CD8-positive, alpha-beta T cell (primary cell): ENCODE measurements at regions of chr6 and their contacts with region 1.

Region 1: DNA sequence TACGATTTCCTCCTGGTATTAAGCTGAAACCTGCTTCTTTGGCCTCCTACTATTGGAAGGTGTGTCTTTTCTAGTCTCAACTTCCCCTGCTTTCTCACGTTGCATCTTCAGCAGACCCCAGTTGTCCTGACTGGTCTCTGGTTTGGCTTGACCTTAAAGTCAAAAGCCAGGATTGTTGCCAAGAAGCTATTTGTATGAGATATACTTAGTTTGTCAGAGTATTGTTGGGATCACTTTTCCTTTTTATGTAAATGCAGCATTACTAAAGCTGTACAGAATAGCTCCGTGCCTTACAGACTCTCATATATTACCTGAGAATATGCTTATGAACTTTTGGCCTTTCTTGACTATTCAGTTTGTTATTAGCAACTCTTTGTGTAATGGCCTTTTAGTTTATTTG is 61.1 kb downstream of the TSPYL4 start:
- DNase-seq: no peak
- ATAC-seq: no peak
- H3K4me3 ChIP-seq: no peak overlapping the region
- H3K4me3 Mint-ChIP-seq: no peak overlapping the region
- H3K27ac ChIP-seq: no peak overlapping the region
- H3K27ac Mint-ChIP-seq: no peak overlapping the region
- H3K4me1 ChIP-seq: no peaks in the 10 kb centered on the region
- H3K4me1 Mint-ChIP-seq: no peaks in the 10 kb centered on the region
- H3K27me3 ChIP-seq: no peaks in the 10 kb centered on the region
- H3K27me3 Mint-ChIP-seq: no peaks in the 10 kb centered on the region
- CTCF ChIP-seq: no peak

Region 2: GRCh38 chr6:116010790-116011401 is 181.9 kb before region 1 on chr6:
- CTCF ChIA-PET with region 1: no interaction called
- POLR2A ChIA-PET with region 1: no interaction called
- intact Hi-C with region 1: no loop called
- DNase-seq: peak in 8 of 9 experiments; percentile 4 to 57 (median 38)
- ATAC-seq: peak; percentile 54
- H3K4me3 ChIP-seq: no peak overlapping the region
- H3K4me3 Mint-ChIP-seq: no peak overlapping the region
- H3K27ac ChIP-seq: no peak overlapping the region
- H3K27ac Mint-ChIP-seq: no peak overlapping the region
- H3K4me1 ChIP-seq: no peaks in the 10 kb centered on the region
- H3K4me1 Mint-ChIP-seq: no peaks in the 10 kb centered on the region
- H3K27me3 ChIP-seq: no peaks in the 10 kb centered on the region
- H3K27me3 Mint-ChIP-seq: peaks cover 17% of the 10 kb centered on the region
- CTCF ChIP-seq: peak; percentile 71

Region 3: GRCh38 chr6:116210750-116211425 is 18.1 kb after region 1 on chr6:
- CTCF ChIA-PET with region 1: no interaction called
- POLR2A ChIA-PET with region 1: no interaction called
- intact Hi-C with region 1: loop called in 1 of 2 experiments (anchors 1 kb)
- DNase-seq: no peak
- ATAC-seq: no peak
- H3K4me3 ChIP-seq: no peak overlapping the region
- H3K4me3 Mint-ChIP-seq: no peak overlapping the region
- H3K27ac ChIP-seq: no peak overlapping the region
- H3K27ac Mint-ChIP-seq: no peak overlapping the region
- H3K4me1 ChIP-seq: no peaks in the 10 kb centered on the region
- H3K4me1 Mint-ChIP-seq: no peaks in the 10 kb centered on the region
- H3K27me3 ChIP-seq: no peaks in the 10 kb centered on the region
- H3K27me3 Mint-ChIP-seq: no peaks in the 10 kb centered on the region
- CTCF ChIP-seq: no peak